Activated naive CD4-positive, alpha-beta T cell treated with anti-CD3 and anti-CD28 coated beads, Interleukin-2, amount 10 ng/mL, durations not matched to agents 7 days and 5 days (primary cell): ENCODE measurements at regions of chr1 and their contacts with region 1.

Region 1: GRCh38 chr1:203625628-203626019 is 1.0 kb upstream of the ATP2B4 start:
- DNase-seq: peak; percentile 76
- H3K4me3 Mint-ChIP-seq: peak overlapping the region; percentile 96
- H3K27ac Mint-ChIP-seq: peak overlapping the region; percentile 95
- H3K4me1 Mint-ChIP-seq: peaks cover 64% of the 10 kb centered on the region
- H3K27me3 Mint-ChIP-seq: no peaks in the 10 kb centered on the region

Region 2: GRCh38 chr1:203593723-203594122 is 31.9 kb before region 1 on chr1:
- CTCF ChIA-PET with region 1: interaction called, 23 read pairs
- DNase-seq: peak; percentile 71
- H3K4me3 Mint-ChIP-seq: no peak overlapping the region
- H3K27ac Mint-ChIP-seq: no peak overlapping the region
- H3K4me1 Mint-ChIP-seq: peaks cover 17% of the 10 kb centered on the region
- H3K27me3 Mint-ChIP-seq: peaks cover 40% of the 10 kb centered on the region

Region 3: DNA sequence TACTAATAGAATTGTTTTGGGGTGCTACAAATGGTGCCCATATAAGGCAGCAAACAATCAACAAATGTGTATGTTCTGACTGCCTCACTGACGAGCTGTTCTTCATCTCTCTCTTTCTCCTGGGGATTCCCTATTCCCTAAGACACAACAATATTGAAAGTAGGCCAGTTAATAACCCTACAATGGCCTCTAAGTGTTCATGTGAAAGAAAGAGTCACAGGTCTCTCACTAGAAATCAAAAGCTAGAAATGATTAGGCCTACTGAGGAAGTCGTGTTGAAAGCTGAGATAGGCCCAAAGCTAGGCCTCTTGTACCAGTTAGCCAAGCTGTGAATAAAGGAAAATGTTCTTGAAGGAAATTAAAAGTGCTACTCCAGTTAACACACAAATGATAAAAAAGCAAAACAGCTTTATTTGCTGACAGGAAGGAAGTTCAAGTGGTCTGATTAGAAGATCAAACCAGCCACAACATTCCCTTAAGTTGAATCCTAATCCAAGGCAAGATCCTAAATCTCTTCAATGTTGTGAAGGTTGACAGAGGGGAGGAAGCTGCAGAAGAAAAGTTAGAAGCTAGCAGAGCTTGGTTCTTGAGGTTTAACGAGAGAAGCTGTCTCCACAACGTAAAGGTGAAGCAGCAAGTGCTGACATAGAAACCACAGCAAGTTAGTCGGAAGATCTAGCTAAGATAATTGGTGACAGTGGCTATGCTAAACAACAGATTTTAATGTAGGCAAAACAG is 27.3 kb after region 1 on chr1:
- CTCF ChIA-PET with region 1: interaction called, 18 read pairs
- DNase-seq: peak; percentile 33
- H3K4me3 Mint-ChIP-seq: peak overlapping the region; percentile 6
- H3K27ac Mint-ChIP-seq: peak overlapping the region; percentile 98
- H3K4me1 Mint-ChIP-seq: peaks cover 81% of the 10 kb centered on the region
- H3K27me3 Mint-ChIP-seq: no peaks in the 10 kb centered on the region

Region 4: DNA sequence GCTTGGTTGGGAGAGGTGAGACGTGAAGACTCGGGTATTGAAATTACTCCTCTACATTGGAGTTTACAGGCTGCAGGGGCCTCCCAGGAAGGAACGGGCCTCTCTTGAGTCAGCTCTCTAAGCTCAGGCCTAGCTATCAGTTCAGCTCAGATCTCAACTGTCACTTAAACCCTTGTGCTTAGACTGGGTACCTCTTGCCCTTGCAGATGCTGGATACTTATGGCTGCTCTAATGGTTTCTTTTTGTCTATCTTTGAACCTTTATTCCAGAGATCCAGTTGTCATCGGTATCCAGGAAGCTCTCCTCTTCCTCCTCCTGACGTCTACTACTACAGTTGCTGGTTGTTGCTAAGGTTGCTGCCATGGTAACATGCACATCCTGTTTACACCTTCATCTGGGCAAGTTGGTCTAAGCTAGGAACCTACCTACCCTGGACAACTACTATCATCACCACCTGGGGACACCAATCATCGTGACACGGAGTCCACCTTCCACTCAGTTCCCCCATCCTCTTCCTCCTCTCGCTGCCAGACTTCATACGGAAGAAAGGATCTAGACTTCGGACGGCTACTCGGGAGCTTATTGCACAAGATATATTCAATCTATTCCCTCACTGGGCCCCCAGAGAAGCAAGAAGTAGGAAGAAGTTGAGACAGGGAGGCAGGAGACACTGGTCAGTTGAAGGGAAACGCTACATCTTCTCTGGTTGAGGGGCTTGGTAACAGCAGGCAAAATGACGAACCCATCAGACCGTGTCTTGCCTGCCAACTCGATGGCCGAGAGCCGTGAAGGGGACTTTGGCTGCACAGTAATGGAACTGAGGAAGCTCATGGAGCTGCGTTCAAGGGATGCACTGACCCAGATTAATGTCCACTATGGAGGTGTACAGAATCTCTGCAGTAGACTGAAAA is 57.1 kb after region 1 on chr1:
- CTCF ChIA-PET with region 1: interaction called, 15 read pairs
- DNase-seq: peak; percentile 82
- H3K4me3 Mint-ChIP-seq: peak overlapping the region; percentile 1
- H3K27ac Mint-ChIP-seq: peak overlapping the region; percentile 78
- H3K4me1 Mint-ChIP-seq: peaks cover 44% of the 10 kb centered on the region
- H3K27me3 Mint-ChIP-seq: no peaks in the 10 kb centered on the region

Region 5: DNA sequence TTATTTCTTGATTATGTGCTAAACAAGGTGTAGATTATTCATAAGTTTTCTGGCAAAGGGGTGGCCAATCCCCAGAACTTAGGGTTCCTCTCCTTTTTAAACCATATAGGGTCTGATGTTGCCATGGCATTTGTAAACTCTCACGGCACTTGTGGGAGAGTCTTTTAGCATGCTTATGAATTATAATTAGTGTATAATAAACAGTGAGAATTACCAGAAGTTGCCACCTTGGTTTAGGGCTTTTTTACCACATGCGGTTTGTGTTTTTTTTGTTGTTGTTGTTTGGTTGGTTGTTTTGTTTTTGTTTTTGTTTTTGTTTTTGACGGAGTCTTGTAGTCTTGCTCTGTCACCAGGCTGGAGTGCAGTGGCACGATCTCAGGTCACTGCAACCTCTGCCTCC is 130.4 kb after region 1 on chr1:
- CTCF ChIA-PET with region 1: no interaction called
- DNase-seq: no peak
- H3K4me3 Mint-ChIP-seq: no peak overlapping the region
- H3K27ac Mint-ChIP-seq: no peak overlapping the region
- H3K4me1 Mint-ChIP-seq: peaks cover 25% of the 10 kb centered on the region
- H3K27me3 Mint-ChIP-seq: no peaks in the 10 kb centered on the region